Gastrocnemius medialis (tissue), 4 donors: ENCODE measurements at regions of chr11 and their contacts with region 1.

Region 1: DNA sequence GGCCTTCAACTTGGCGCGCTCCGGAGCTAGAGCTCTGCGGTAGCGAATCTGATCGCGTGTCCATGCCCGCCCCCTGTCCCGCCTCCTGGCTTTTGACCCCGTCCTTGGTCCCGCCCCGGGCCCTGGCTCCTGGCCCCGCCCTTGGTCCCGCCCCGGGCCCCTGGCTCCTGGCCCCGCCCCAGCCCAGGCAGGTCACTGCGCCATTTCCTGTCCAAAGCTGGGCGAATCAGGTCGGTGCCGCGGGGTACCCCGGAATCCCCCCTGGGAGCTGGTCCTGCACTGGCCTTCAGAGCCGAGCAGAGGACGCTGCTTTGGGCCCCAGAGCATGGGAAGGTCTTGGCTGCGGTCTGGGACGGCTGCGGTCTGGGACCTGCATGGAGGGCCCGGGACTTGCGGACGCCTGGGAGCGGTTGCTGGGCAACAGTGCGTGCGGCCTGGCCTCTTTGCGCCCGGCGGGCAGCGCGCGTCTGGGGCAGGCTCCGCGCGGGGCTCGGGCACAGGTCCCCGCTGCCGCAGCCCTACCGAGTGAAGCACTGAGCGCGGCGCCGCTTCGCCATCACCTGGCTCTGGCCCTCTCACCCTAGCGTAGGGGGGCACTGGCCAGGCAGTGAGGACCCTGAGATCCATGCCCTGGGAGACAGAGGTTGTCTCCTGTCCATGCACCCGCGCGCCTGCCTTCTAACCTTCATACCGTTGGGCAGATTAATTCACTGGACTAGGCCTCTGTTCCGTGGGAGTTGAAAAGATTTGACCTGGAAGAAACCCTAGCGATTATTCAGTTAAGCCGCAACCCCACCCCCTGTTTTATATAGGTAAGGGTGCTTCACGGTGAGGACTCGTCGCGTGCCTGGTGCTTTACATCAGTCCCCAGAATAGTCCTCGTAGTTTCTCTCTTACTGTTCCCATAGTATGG is at the start of gene TTC12:
- DNase-seq: peak; percentile 88 to 92
- ATAC-seq: peak; percentile 96 to 98
- H3K4me3 ChIP-seq: peak within 1 kb of the TSS; percentile 73 to 98 (median 84)
- H3K27ac ChIP-seq: peak within 1 kb of the TSS; percentile 78 to 94 (median 90)
- H3K4me1 ChIP-seq: peaks cover 8 to 18% of the 10 kb centered on the region in 2 donors
- H3K27me3 ChIP-seq: no peaks in the 10 kb centered on the region
- CTCF ChIP-seq: no peak
- POLR2A ChIP-seq: peak; percentile 27 to 42
- total RNA-seq, gene TTC12: 3.5 to 22.5 (median 5.2) TPM

Region 2: DNA sequence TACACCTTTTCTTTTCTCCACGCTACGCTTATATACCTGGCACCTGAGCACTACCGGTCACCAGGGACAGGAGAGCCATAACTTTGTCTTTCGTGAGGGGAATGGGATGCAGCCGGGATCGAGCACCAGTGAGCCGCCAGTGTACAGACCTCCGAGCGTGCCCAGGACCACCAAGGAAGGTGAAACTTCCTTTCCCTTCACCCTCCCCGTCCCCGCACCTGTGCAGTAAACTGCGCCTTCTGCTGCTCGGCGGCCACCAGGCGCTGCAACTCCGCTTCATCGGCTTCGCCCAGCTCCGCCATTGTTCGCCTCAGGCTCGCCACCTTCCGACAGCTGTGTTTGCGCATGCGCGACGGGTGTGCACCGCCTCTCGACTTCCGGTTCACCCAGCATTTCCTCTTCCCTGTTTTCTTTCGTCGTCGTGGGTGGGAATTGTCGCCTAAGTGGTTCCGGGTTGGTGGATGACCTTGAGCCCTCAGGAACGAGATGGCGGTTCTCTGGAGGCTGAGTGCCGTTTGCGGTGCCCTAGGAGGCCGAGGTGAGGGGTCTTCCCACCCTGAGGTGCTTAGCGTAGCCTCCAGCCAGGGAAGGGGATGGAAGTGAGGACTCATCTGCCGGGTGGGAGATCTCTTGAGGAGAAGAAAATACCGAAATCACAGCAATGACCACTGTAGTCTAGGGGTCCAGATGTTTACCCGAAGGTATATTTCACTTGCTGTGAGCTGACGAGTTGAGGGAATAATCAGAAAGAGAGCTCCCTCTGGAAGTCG is 1228.0 kb before region 1 on chr11 and contains the starts of genes SDHD and TIMM8B:
- in situ Hi-C with region 1: no loop called
- intact Hi-C with region 1: loop called (anchors 10 kb)
- DNase-seq: peak; percentile 94 to 96
- ATAC-seq: peak; percentile 96 to 97
- H3K4me3 ChIP-seq: peak within 1 kb of the TSS; percentile 82 to 99 (median 90)
- H3K27ac ChIP-seq: peak within 1 kb of the TSS; percentile 79 to 97 (median 90)
- H3K4me1 ChIP-seq: peaks cover 49 to 66% of the 10 kb centered on the region in 2 donors
- H3K27me3 ChIP-seq: no peaks in the 10 kb centered on the region
- CTCF ChIP-seq: peak in 4 of 5 experiments; percentile 19 to 39 (median 33)
- POLR2A ChIP-seq: peak; percentile 86 to 92
- total RNA-seq, gene SDHD: 170 to 261 (median 202) TPM
- total RNA-seq, gene TIMM8B: 60.3 to 93.2 (median 69.4) TPM

Region 3: DNA sequence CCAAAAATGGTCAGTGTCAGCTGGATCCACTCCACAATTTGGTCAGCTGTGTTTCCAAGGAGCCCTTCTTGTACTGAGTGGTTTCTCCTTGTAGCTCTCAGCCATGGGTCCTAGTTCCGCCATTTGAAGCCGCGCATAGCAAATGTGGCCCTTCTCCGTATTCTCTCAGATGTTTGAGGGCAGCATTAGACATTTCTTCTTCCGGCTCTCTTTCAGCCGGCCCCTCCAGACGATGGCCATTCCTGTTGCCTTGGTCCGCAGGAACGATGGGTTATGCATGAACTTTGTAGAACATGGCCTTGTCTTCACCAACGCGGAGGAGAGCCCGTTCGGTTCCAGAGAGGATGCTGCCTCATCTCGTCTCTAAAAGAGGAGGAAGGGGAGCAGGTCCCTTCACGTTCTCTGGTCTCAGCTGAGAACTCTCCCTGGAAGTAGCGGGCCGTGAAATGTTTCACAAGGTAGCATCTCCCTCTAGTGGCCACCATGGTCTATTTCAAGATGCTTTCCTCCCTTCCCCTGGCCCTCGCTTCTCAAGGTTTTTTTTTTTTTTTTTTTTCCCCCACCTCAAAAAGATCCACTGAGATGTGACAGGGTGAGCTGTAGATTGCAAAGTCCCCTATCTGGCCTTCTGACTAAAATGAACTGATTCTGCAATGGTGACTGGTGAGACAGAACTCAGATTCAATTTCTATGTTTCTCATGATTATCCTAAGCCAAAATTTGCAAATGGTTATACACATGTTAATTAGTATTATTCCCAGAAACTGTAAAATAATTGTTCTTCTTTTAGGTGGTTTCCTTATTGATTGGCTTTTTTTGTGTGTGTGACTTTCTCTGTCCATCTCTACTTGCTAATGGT is 1034.1 kb before region 1 on chr11:
- in situ Hi-C with region 1: no loop called
- intact Hi-C with region 1: loop called (anchors 10 kb)
- DNase-seq: peak; percentile 35 to 59
- ATAC-seq: peak; percentile 84 to 96
- H3K4me3 ChIP-seq: peak overlapping the region; percentile 43 to 67 (median 60)
- H3K27ac ChIP-seq: peak overlapping the region in 1 of 4 donors; percentile 29
- H3K4me1 ChIP-seq: peaks cover 0 to 4% of the 10 kb centered on the region in 2 donors
- H3K27me3 ChIP-seq: no peaks in the 10 kb centered on the region
- CTCF ChIP-seq: peak; percentile 48 to 73 (median 66)
- POLR2A ChIP-seq: no peak

Region 4: GRCh38 chr11:113193894-113194293 is 120.8 kb before region 1 on chr11:
- in situ Hi-C with region 1: no loop called
- intact Hi-C with region 1: no loop called
- DNase-seq: no peak
- ATAC-seq: no peak
- H3K4me3 ChIP-seq: no peak overlapping the region
- H3K27ac ChIP-seq: no peak overlapping the region
- H3K4me1 ChIP-seq: peaks cover 20 to 46% of the 10 kb centered on the region in 2 donors
- H3K27me3 ChIP-seq: no peaks in the 10 kb centered on the region
- CTCF ChIP-seq: no peak
- POLR2A ChIP-seq: no peak

Region 5: GRCh38 chr11:113376156-113376555 is 61.5 kb after region 1 on chr11:
- in situ Hi-C with region 1: no loop called
- intact Hi-C with region 1: no loop called
- DNase-seq: no peak
- ATAC-seq: no peak
- H3K4me3 ChIP-seq: no peak overlapping the region
- H3K27ac ChIP-seq: no peak overlapping the region
- H3K4me1 ChIP-seq: no peaks in the 10 kb centered on the region
- H3K27me3 ChIP-seq: no peaks in the 10 kb centered on the region
- CTCF ChIP-seq: no peak
- POLR2A ChIP-seq: no peak

Region 6: GRCh38 chr11:113730887-113731726 is 416.5 kb after region 1 on chr11:
- in situ Hi-C with region 1: loop called (anchors 5 to 10 kb)
- intact Hi-C with region 1: no loop called
- DNase-seq: peak; percentile 17 to 64
- ATAC-seq: peak; percentile 81 to 97
- H3K4me3 ChIP-seq: no peak overlapping the region
- H3K27ac ChIP-seq: no peak overlapping the region
- H3K4me1 ChIP-seq: peaks cover 5 to 14% of the 10 kb centered on the region in 2 donors
- H3K27me3 ChIP-seq: no peaks in the 10 kb centered on the region
- CTCF ChIP-seq: peak; percentile 41 to 79 (median 71)
- POLR2A ChIP-seq: no peak

Region 7: DNA sequence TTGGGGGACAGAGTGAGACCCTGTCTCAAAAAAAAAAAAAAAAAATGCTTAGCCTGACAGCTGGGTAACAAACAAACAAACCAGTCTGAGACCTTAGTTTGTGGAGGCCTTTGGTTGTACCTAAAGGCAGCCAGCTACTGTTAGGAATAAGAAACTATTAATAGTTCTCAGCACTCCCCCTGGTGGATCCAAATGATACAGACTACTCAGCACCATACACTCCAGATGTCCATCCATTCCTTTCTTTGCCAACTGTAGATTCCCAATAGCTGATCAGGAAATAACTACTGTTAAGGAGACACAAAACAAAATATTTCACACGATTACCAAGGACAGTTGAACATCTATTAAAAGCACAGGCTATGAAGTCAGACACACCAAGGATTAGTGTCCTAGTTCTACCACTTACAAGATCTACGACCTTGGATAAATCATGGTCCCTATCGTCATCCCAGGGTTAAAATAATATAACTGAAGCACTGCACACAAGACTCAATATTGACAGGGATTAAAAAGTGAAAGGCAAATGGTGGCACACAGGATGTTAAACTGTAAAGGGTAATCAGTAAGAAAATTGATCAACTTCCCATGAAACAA is 482.1 kb after region 1 on chr11:
- in situ Hi-C with region 1: loop called in 1 of 4 experiments (anchors 10 kb)
- intact Hi-C with region 1: no loop called
- DNase-seq: no peak
- ATAC-seq: peak; percentile 96 to 99
- H3K4me3 ChIP-seq: no peak overlapping the region
- H3K27ac ChIP-seq: peak overlapping the region in 2 of 4 donors; percentile 21 to 48
- H3K4me1 ChIP-seq: peaks cover 0 to 5% of the 10 kb centered on the region in 2 donors
- H3K27me3 ChIP-seq: no peaks in the 10 kb centered on the region
- CTCF ChIP-seq: peak; percentile 57 to 75 (median 65)
- POLR2A ChIP-seq: no peak